Spleen (tissue), 13 donors: ENCODE measurements at regions of chr6 and their contacts with region 1.

Region 1: DNA sequence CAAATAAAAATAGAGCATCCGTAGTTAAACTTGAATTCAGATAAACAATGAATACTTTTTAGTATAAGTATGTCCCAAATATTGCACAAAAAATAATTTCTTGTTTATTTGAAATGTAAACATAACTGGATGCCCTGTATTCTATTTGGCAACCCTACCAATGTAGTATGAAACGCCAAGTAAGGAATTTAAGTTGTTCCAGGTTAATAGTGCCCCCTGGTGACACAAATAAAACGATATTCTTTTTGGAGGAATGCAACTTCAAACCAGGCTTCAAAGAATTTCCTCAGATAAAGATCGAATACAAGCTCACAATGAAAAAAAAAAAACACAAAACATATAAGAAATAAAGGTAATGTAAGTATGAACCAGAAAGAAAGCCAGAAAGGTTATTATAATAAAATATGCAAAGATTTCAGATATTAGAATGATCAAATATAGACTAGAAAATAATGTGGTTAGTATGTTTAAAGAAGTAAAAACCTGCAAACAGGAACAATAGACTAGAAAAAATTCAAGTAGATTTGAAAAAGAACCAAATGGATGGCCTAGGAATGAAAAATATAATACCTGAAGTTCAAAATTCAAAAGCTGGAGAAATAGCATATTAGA is 18.4 kb upstream of the AKAP7 start:
- DNase-seq: no peak
- H3K4me3 ChIP-seq: no peak overlapping the region
- H3K27ac ChIP-seq: no peak overlapping the region
- H3K4me1 ChIP-seq: peaks cover 0 to 15% (median 4%) of the 10 kb centered on the region in 6 donors
- H3K27me3 ChIP-seq: no peaks in the 10 kb centered on the region
- CTCF ChIP-seq: peak in 10 of 11 experiments; percentile 11 to 68 (median 58)
- POLR2A ChIP-seq: no peak

Region 2: DNA sequence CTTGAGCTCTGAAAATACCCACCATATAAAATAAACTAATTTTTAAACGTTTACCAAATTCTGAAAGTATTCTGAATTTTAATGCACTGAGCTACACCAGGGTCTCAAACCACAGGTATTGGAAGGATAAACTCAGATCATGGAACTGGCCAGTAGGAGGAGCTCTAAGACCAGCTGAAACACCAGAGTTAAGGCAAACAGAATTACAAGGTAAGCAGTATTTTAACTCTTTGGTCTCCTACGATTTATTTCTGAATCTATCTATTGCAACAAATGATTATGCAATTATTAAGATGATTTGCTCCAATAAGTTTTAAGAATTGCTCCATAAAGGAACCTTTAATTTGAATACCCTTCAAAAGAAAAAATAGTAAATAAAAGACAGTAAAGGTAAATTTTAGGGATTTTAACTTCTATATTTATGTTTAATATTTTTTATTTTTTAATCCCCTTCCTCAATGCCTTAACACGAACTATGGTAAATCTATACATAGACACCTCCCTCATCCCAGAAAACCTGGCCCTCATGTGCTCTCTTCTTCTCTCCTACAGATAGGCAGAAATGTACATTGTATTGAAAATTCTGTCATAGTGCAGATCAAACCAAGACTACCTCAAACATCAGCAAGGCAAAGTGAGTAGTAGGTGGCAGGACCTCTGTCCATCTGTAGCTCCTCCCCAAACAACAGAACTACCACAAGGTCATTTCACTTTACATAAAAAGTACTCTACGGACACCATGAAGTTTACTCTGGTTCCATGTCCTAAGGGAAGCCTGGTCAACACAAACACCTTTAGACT is 231.3 kb before region 1 on chr6:
- intact Hi-C with region 1: loop called (anchors 5 kb)
- DNase-seq: no peak
- H3K4me3 ChIP-seq: no peak overlapping the region
- H3K27ac ChIP-seq: no peak overlapping the region
- H3K4me1 ChIP-seq: no peaks in the 10 kb centered on the region
- H3K27me3 ChIP-seq: no peaks in the 10 kb centered on the region
- CTCF ChIP-seq: peak in 10 of 11 experiments; percentile 64 to 94 (median 84)
- POLR2A ChIP-seq: no peak

Region 3: DNA sequence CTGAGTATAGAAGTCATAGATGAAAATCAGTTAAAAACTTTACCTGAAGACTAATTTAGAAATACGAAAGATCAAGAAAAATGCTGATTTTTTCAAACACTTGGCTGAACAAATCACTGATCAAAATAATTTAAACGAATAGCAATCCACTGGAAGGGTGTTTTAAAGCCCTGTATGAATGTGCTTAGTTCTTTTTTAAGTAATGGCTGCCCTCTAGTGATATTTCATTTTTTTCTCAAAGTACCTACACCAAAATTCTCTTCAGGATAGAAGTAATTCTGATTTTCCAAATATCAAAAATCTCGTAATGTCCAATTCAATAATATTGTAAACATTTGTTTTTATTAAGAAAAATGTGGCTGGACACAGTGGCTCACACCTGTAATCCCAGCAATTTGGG is 50.9 kb after region 1 on chr6:
- intact Hi-C with region 1: no loop called
- DNase-seq: no peak
- H3K4me3 ChIP-seq: no peak overlapping the region
- H3K27ac ChIP-seq: no peak overlapping the region
- H3K4me1 ChIP-seq: no peaks in the 10 kb centered on the region
- H3K27me3 ChIP-seq: no peaks in the 10 kb centered on the region
- CTCF ChIP-seq: no peak
- POLR2A ChIP-seq: no peak